OCI-LY7 (cell line): ENCODE measurements at regions of chrX and their contacts with region 1.

Region 1: GRCh38 chrX:31154946-31155345 is 83.1 kb upstream of the FTHL17 start:
- DNase-seq: no peak
- H3K4me3 ChIP-seq: no peak overlapping the region
- H3K27ac ChIP-seq: no peak overlapping the region
- H3K4me1 ChIP-seq: no peaks in the 10 kb centered on the region
- CTCF ChIP-seq: no peak

Region 2: GRCh38 chrX:31168551-31168950 is 13.6 kb after region 1 on chrX:
- CTCF ChIA-PET with region 1: no interaction called
- POLR2A ChIA-PET with region 1: interaction called, 10 read pairs
- intact Hi-C with region 1: no loop called
- DNase-seq: peak; percentile 57
- H3K4me3 ChIP-seq: peak overlapping the region; percentile 26
- H3K27ac ChIP-seq: peak overlapping the region; percentile 78
- H3K4me1 ChIP-seq: peaks cover 33% of the 10 kb centered on the region
- CTCF ChIP-seq: no peak

Region 3: GRCh38 chrX:32572644-32573043 is 1417.7 kb after region 1 on chrX:
- CTCF ChIA-PET with region 1: no interaction called
- POLR2A ChIA-PET with region 1: no interaction called
- intact Hi-C with region 1: no loop called
- DNase-seq: no peak
- H3K4me3 ChIP-seq: no peak overlapping the region
- H3K27ac ChIP-seq: no peak overlapping the region
- H3K4me1 ChIP-seq: no peaks in the 10 kb centered on the region
- CTCF ChIP-seq: no peak